H1 (cell line): ENCODE measurements at regions of chr4 and their contacts with region 1.

Region 1: GRCh38 chr4:143025081-143025704 is 159.5 kb upstream of the USP38 start:
- DNase-seq: no peak
- H3K4me3 ChIP-seq: no peak overlapping the region
- H3K27ac ChIP-seq: no peak overlapping the region
- H3K4me1 ChIP-seq: no peaks in the 10 kb centered on the region
- H3K27me3 ChIP-seq: no peaks in the 10 kb centered on the region
- CTCF ChIP-seq: peak in 2 of 3 experiments; percentile 51 to 67; a peak in 2 of 4 replicates
- EP300 ChIP-seq: no peak
- POLR2A ChIP-seq: no peak
- RAD21 ChIP-seq: peak; percentile 86

Region 2: GRCh38 chr4:142883040-142883832 is 142.0 kb before region 1 on chr4:
- CTCF ChIA-PET with region 1: interaction called, 25 read pairs
- POLR2A ChIA-PET with region 1: no interaction called
- DNase-seq: no peak
- H3K4me3 ChIP-seq: no peak overlapping the region
- H3K27ac ChIP-seq: no peak overlapping the region
- H3K4me1 ChIP-seq: 0 out of 7 replicates have a peak, but pooled peaks cover 0 to 2% (median 0%) of the 10 kb centered on the region in 4 experiments
- H3K27me3 ChIP-seq: no peaks in the 10 kb centered on the region
- CTCF ChIP-seq: peak in 2 of 3 experiments; percentile 49 to 58; a peak in 3 of 4 replicates
- EP300 ChIP-seq: no peak
- POLR2A ChIP-seq: no peak
- RAD21 ChIP-seq: peak; percentile 65 to 70

Region 3: DNA sequence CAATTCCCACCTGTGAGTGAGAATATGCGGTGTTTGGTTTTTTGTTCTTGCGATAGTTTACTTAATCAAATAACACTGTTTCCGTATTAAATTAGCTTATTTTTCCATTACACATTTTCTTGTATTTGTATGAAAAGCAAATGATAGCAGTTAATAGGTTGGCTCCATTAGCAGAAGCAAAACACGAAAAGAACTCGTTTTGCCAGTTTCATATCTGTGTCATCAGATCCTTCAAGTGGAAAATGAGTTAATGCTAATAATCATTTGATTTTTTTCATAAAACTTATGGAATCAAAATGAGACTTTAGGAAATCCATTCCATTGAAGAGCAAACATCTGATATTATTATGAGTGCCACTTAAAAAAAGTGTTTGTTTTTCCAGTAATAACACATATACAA is 25.3 kb before region 1 on chr4:
- CTCF ChIA-PET with region 1: interaction called, 15 read pairs
- POLR2A ChIA-PET with region 1: no interaction called
- DNase-seq: no peak
- H3K4me3 ChIP-seq: no peak overlapping the region
- H3K27ac ChIP-seq: no peak overlapping the region
- H3K4me1 ChIP-seq: no peaks in the 10 kb centered on the region
- H3K27me3 ChIP-seq: no peaks in the 10 kb centered on the region
- CTCF ChIP-seq: no peak
- EP300 ChIP-seq: no peak
- POLR2A ChIP-seq: no peak
- RAD21 ChIP-seq: no peak

Region 4: DNA sequence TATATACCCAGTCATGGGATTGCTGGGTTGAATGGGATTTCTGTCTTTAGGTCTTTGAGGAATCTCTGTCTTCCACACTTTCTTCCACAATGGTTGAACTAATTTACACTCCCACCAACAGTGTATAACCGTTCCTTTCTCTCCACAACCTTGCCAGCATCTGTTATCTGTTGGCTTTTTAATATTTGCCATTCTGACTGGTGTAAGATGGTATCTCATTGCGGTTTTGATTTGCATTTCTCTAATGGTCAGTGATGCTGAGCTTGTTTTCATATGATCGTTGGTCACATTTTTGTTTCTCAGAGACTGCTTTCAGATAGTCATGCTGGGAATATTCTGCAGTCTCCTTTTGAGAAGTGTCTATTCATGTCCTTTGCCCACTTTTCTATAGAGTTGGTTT is 34.1 kb after region 1 on chr4:
- CTCF ChIA-PET with region 1: no interaction called
- POLR2A ChIA-PET with region 1: no interaction called
- DNase-seq: no peak
- H3K4me3 ChIP-seq: no peak overlapping the region
- H3K27ac ChIP-seq: no peak overlapping the region
- H3K4me1 ChIP-seq: no peaks in the 10 kb centered on the region
- H3K27me3 ChIP-seq: no peaks in the 10 kb centered on the region
- CTCF ChIP-seq: no peak
- EP300 ChIP-seq: no peak
- POLR2A ChIP-seq: no peak
- RAD21 ChIP-seq: no peak